ENCODE measurements at regions of chr4 and their contacts with region 1.

Region 1: GRCh38 chr4:99949034-99949998 is 759 bp downstream of the H2AZ1 start:
- DNase-seq: peak; percentile 92
- H3K4me3 Mint-ChIP-seq: no peak overlapping the region
- H3K27ac Mint-ChIP-seq: no peak overlapping the region
- H3K4me1 Mint-ChIP-seq: peaks cover 33% of the 10 kb centered on the region
- H3K27me3 Mint-ChIP-seq: no peaks in the 10 kb centered on the region

Region 2: DNA sequence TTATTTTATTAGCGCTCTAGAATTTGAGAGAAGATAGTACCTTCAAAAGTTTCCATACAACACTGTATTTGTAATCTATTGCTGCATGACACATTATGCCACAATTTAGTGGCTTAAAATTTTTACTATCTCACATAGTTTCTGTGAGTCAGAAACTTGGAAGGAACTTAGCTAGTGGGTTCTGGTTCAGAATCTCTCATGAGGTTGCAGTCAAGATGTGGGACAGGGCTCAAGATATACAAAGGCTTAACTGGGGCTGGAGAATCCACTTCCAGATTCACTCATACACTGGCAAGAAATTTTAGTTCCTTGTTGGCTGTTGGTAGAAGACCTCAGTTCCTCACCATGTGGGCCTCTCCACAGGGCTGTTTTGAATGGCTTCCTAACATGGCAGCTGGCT is 280.2 kb before region 1 on chr4:
- CTCF ChIA-PET with region 1: no interaction called
- POLR2A ChIA-PET with region 1: no interaction called
- DNase-seq: no peak
- H3K4me3 Mint-ChIP-seq: no peak overlapping the region
- H3K27ac Mint-ChIP-seq: no peak overlapping the region
- H3K4me1 Mint-ChIP-seq: no peaks in the 10 kb centered on the region
- H3K27me3 Mint-ChIP-seq: no peaks in the 10 kb centered on the region

Region 3: DNA sequence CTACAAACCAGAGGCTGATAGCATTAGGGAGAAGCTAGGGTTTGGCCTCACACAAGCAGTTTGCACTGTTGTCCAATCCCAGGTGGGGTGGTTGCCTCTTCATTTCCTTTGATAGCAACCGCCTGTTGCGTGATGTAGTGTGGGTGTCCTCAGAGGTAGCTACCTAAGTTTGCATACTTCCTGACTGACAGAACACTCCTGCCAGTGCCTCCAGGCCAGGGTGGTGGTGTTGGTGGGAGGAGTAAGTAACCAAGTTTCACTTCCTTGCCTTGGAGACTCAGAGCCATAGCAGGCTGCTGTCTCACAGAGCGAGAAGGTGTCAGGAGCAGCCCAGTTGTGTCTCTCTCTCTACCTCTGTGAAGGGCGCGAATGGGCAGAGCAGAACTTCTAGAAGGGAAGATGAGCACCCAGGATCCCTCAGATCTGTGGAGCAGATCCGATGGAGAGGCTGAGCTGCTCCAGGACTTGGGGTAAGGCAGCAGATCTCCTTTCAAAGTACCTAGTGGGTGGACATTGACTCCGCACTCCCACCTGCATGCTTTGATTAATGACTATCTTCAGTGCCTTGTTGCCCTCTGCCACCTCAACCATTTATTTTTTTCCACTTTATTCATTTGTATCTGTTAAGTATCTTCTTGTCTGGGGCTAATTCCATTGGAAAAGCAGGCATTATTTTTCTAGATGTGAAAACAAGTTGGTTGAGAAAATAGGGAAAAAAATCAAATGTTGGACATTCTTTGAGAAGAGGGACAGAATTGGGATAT is 132.6 kb before region 1 on chr4 and contains the start of gene DAPP1:
- CTCF ChIA-PET with region 1: interaction called, 17 read pairs
- POLR2A ChIA-PET with region 1: interaction called, 105 read pairs
- DNase-seq: peak; percentile 90
- H3K4me3 Mint-ChIP-seq: peak within 1 kb of the TSS; percentile 87
- H3K27ac Mint-ChIP-seq: peak within 1 kb of the TSS; percentile 91
- H3K4me1 Mint-ChIP-seq: peaks cover 72% of the 10 kb centered on the region
- H3K27me3 Mint-ChIP-seq: no peaks in the 10 kb centered on the region
- total RNA-seq, gene DAPP1: 35.8 to 39.4 TPM

Region 4: DNA sequence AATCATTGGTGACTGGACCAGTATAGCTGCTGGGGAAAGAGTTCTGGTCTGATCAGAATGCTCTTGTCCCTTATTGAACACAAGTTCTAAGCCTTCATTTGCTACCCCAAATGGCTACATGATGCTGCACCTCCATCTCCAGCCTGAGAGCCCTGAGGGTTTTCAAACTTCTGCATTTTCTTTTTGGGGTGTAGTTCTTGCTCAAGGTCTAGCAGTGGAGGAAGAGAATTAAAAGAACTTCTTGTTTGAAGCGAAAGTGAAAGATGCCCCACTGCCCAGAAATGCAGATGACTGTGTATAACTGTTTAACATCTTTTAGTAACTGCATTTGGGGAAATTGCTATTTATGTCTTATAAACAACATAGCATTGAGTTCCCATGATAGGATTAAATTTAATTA is 93.6 kb before region 1 on chr4:
- CTCF ChIA-PET with region 1: interaction called, 5 read pairs
- POLR2A ChIA-PET with region 1: interaction called, 11 read pairs
- DNase-seq: peak; percentile 43
- H3K4me3 Mint-ChIP-seq: peak overlapping the region; percentile 36
- H3K27ac Mint-ChIP-seq: peak overlapping the region; percentile 83
- H3K4me1 Mint-ChIP-seq: peaks cover 71% of the 10 kb centered on the region
- H3K27me3 Mint-ChIP-seq: no peaks in the 10 kb centered on the region

Region 5: DNA sequence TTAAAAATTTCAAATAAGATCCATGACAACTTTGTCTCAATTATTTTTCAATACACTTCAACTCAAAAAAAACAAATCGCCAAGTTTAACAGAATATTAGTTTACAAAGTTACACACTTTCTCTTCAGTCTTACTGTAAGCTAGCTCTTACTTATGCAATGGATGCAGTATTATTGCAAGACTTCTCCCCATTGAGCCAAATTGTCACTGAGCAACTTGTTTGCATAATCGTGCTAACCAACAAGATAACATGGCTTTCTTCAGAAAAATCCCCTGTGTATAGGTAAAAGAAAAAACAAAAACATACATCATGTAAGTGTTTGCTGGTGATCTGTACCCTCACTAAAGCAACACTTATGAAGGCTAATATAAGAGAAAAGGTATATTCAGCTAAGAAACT is 21.8 kb before region 1 on chr4:
- CTCF ChIA-PET with region 1: interaction called, 3 read pairs
- POLR2A ChIA-PET with region 1: interaction called, 10 read pairs
- DNase-seq: no peak
- H3K4me3 Mint-ChIP-seq: no peak overlapping the region
- H3K27ac Mint-ChIP-seq: no peak overlapping the region
- H3K4me1 Mint-ChIP-seq: peaks cover 22% of the 10 kb centered on the region
- H3K27me3 Mint-ChIP-seq: no peaks in the 10 kb centered on the region

Region 6: DNA sequence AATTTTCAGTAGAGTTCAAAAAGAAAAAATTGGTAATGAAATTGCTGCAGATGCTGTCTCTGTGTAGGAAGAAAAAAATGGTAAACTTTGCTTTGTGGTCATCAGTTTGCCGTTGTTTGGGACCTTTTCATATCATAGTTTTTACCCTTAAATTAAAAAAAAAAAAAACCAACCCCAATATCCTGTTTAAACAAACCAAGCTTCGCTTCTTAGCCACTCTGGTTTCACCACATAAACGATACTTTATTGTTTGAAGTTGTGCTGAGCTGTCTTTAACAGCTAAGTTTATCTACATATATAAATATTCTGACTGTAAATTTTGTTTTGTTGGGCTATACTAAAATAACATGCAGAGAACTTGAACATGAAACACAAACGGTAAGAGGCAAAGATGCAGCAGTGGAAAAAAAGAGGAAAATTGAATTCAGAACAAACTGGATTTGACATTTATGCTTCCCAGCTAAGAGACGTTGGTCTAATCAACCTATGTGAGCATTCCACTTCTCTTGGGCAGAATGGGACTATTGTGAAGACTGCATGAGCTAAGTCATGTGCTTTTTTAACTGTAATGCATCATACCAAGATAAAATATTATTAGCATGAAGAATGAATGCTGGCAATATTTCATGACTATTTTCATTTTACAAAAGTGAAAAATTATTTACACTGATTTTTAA is 16.5 kb after region 1 on chr4:
- CTCF ChIA-PET with region 1: interaction called, 7 read pairs
- POLR2A ChIA-PET with region 1: interaction called, 15 read pairs
- DNase-seq: no peak
- H3K4me3 Mint-ChIP-seq: no peak overlapping the region
- H3K27ac Mint-ChIP-seq: no peak overlapping the region
- H3K4me1 Mint-ChIP-seq: peaks cover 17% of the 10 kb centered on the region
- H3K27me3 Mint-ChIP-seq: peaks cover 6% of the 10 kb centered on the region

Region 7: GRCh38 chr4:99983289-99983943 is 34.1 kb after region 1 on chr4:
- CTCF ChIA-PET with region 1: no interaction called
- POLR2A ChIA-PET with region 1: no interaction called
- DNase-seq: no peak
- H3K4me3 Mint-ChIP-seq: no peak overlapping the region
- H3K27ac Mint-ChIP-seq: no peak overlapping the region
- H3K4me1 Mint-ChIP-seq: no peaks in the 10 kb centered on the region
- H3K27me3 Mint-ChIP-seq: peaks cover 7% of the 10 kb centered on the region